Endothelial cell of umbilical vein (primary cell): ENCODE measurements at regions of chr16 and their contacts with region 1.

Region 1: GRCh38 chr16:1105888-1106620 is 10.0 kb upstream of the C1QTNF8 start:
- DNase-seq: peak; percentile 57
- H3K4me3 ChIP-seq: no peak overlapping the region
- H3K27ac ChIP-seq: no peak overlapping the region
- H3K4me1 ChIP-seq: no peaks in the 10 kb centered on the region
- H3K27me3 ChIP-seq: no peaks in the 10 kb centered on the region
- CTCF ChIP-seq: peak; percentile 73 to 99
- POLR2A ChIP-seq: no peak

Region 2: GRCh38 chr16:813204-813915 is 292.7 kb before region 1 on chr16:
- CTCF ChIA-PET with region 1: no interaction called
- POLR2A ChIA-PET with region 1: no interaction called
- dilution Hi-C with region 1: no loop called
- intact Hi-C with region 1: loop called (anchors 2 kb)
- DNase-seq: no peak
- H3K4me3 ChIP-seq: no peak overlapping the region
- H3K27ac ChIP-seq: no peak overlapping the region
- H3K4me1 ChIP-seq: no peaks in the 10 kb centered on the region
- H3K27me3 ChIP-seq: peaks cover 2 to 20% of the 10 kb centered on the region in 2 experiments
- CTCF ChIP-seq: peak; percentile 49 to 67
- POLR2A ChIP-seq: no peak

Region 3: GRCh38 chr16:1014771-1015495 is 91.1 kb before region 1 on chr16:
- CTCF ChIA-PET with region 1: no interaction called
- POLR2A ChIA-PET with region 1: no interaction called
- dilution Hi-C with region 1: no loop called
- intact Hi-C with region 1: no loop called
- DNase-seq: no peak
- H3K4me3 ChIP-seq: no peak overlapping the region
- H3K27ac ChIP-seq: no peak overlapping the region
- H3K4me1 ChIP-seq: no peaks in the 10 kb centered on the region
- H3K27me3 ChIP-seq: no peaks in the 10 kb centered on the region
- CTCF ChIP-seq: no peak
- POLR2A ChIP-seq: no peak

Region 4: DNA sequence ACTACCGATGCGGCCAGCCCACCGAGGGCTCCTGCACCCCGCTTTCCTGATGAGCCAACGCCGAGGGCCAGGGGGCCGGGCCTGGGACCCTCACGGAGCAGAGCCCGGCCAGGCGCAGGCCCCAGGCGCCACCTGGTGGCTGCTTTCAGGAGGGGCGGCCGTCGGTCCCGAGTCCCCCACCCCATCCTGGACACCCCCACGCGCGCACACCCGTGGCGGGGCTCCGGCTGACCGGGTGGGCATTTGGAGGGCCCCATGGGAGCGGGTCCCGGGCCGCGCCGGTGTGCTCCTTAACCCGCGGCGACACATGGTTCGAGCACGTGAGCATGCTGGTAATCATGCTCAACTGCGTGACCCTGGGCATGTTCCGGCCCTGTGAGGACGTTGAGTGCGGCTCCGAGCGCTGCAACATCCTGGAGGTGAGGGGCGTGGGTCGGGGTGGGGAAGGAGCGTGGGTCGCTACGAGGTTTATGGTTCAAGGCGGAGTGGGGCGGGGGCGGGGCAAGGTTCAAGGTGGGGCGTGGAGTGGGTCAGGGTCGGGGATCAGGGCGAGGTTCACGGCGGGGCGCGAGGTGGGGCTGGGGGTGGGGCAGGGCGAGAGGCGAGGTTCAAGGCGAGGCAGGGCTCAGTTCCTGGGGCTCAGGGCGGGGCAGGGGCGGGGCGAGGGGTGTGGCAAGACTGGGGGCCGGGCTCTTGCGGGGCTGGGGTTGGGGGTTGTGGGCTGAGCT is 88.8 kb after region 1 on chr16:
- CTCF ChIA-PET with region 1: no interaction called
- POLR2A ChIA-PET with region 1: no interaction called
- dilution Hi-C with region 1: no loop called
- intact Hi-C with region 1: loop called (anchors 1 kb)
- DNase-seq: no peak
- H3K4me3 ChIP-seq: no peak overlapping the region
- H3K27ac ChIP-seq: no peak overlapping the region
- H3K4me1 ChIP-seq: no peaks in the 10 kb centered on the region
- H3K27me3 ChIP-seq: no peaks in the 10 kb centered on the region
- CTCF ChIP-seq: peak; percentile 66 to 88
- POLR2A ChIP-seq: no peak

Region 5: DNA sequence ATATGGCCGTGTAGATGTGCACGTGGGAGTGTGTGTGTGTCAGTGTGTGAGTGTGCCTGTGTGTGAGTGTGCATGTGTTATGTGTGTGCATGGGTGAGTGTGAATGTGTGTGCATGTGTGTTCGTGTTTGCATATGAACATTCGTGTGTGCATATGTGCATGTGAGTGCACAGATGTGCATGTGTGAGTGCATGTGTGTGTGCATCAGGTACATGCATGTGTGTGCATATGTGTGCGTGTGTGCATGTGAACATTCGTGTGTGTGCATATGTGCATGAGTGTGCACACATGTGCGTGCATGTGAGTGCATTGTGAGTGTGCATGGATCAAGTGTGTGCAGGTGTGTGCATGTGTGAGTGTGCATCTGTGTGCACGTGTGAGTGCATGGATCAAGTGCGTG is 131.9 kb after region 1 on chr16:
- CTCF ChIA-PET with region 1: no interaction called
- POLR2A ChIA-PET with region 1: no interaction called
- dilution Hi-C with region 1: no loop called
- intact Hi-C with region 1: no loop called
- DNase-seq: no peak
- H3K4me3 ChIP-seq: no peak overlapping the region
- H3K27ac ChIP-seq: no peak overlapping the region
- H3K4me1 ChIP-seq: no peaks in the 10 kb centered on the region
- H3K27me3 ChIP-seq: no peaks in the 10 kb centered on the region
- CTCF ChIP-seq: no peak
- POLR2A ChIP-seq: no peak

Region 6: GRCh38 chr16:1385232-1385631 is 279.2 kb after region 1 on chr16:
- CTCF ChIA-PET with region 1: no interaction called
- POLR2A ChIA-PET with region 1: no interaction called
- dilution Hi-C with region 1: no loop called
- intact Hi-C with region 1: no loop called
- DNase-seq: no peak
- H3K4me3 ChIP-seq: no peak overlapping the region
- H3K27ac ChIP-seq: no peak overlapping the region
- H3K4me1 ChIP-seq: no peaks in the 10 kb centered on the region
- H3K27me3 ChIP-seq: no peaks in the 10 kb centered on the region
- CTCF ChIP-seq: no peak
- POLR2A ChIP-seq: no peak